Body of pancreas (tissue), 4 donors: ENCODE measurements at regions of chr1 and their contacts with region 1.

Region 1: GRCh38 chr1:19582302-19582701 is 61.8 kb upstream of the NBL1 start:
- DNase-seq: peak; percentile 72 to 84 (median 75)
- ATAC-seq: peak; percentile 87
- H3K4me3 ChIP-seq: no peak overlapping the region
- H3K27ac ChIP-seq: no peak overlapping the region
- H3K4me1 ChIP-seq: no peaks in the 10 kb centered on the region
- H3K27me3 ChIP-seq: no peaks in the 10 kb centered on the region
- CTCF ChIP-seq: peak; percentile 40 to 75 (median 60)
- POLR2A ChIP-seq: no peak

Region 2: DNA sequence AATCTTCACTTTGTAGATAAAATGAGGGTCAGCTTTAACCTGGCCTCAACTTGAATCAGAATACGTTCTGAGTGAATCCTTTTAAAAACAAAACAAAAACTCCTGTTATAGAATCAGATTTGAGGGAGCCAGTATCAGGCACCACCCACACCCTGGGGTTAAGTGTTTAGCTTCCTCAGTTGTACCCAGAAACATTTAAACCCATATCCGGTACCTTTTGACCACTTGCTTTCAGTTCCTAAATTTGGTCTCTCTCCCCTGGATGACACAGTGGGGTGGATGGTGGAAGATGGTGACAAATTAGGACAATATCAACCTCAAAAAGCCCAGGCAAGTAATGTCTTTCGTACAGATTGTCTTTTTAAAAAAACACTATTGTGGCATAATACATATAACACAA is 1091.1 kb before region 1 on chr1:
- intact Hi-C with region 1: no loop called
- DNase-seq: no peak
- ATAC-seq: no peak
- H3K4me3 ChIP-seq: no peak overlapping the region
- H3K27ac ChIP-seq: no peak overlapping the region
- H3K4me1 ChIP-seq: no peaks in the 10 kb centered on the region
- H3K27me3 ChIP-seq: no peaks in the 10 kb centered on the region
- CTCF ChIP-seq: no peak
- POLR2A ChIP-seq: no peak

Region 3: GRCh38 chr1:19390901-19391595 is 191.3 kb before region 1 on chr1:
- intact Hi-C with region 1: loop called (anchors 10 kb)
- DNase-seq: peak; percentile 41 to 61 (median 48)
- ATAC-seq: peak; percentile 60
- H3K4me3 ChIP-seq: no peak overlapping the region
- H3K27ac ChIP-seq: peak overlapping the region in 2 of 4 donors; percentile 38 to 59
- H3K4me1 ChIP-seq: peaks cover 12% of the 10 kb centered on the region
- H3K27me3 ChIP-seq: no peaks in the 10 kb centered on the region
- CTCF ChIP-seq: peak in 6 of 7 experiments; percentile 61 to 74 (median 66)
- POLR2A ChIP-seq: no peak